Endothelial cell of umbilical vein (primary cell): ENCODE measurements at regions of chr19 and their contacts with region 1.

Region 1: GRCh38 chr19:28330831-28331230 is 882.1 kb downstream of the UQCRFS1 start:
- DNase-seq: peak; percentile 59
- H3K4me3 ChIP-seq: no peak overlapping the region
- H3K27ac ChIP-seq: peak overlapping the region; percentile 73
- H3K4me1 ChIP-seq: peaks cover 13% of the 10 kb centered on the region
- H3K27me3 ChIP-seq: peaks cover 0 to 3% of the 10 kb centered on the region in 2 experiments
- CTCF ChIP-seq: no peak
- POLR2A ChIP-seq: no peak

Region 2: GRCh38 chr19:27793644-27794493 is 537.0 kb before region 1 on chr19:
- CTCF ChIA-PET with region 1: no interaction called
- POLR2A ChIA-PET with region 1: no interaction called
- dilution Hi-C with region 1: no loop called
- intact Hi-C with region 1: loop called (anchors 5 kb)
- DNase-seq: peak; percentile 93
- H3K4me3 ChIP-seq: peak overlapping the region; percentile 61 to 65 (median 61)
- H3K27ac ChIP-seq: peak overlapping the region; percentile 14
- H3K4me1 ChIP-seq: peaks cover 5% of the 10 kb centered on the region
- H3K27me3 ChIP-seq: no peaks in the 10 kb centered on the region
- CTCF ChIP-seq: no peak
- POLR2A ChIP-seq: no peak

Region 3: GRCh38 chr19:28289295-28290063 is 41.4 kb before region 1 on chr19:
- CTCF ChIA-PET with region 1: no interaction called
- POLR2A ChIA-PET with region 1: no interaction called
- dilution Hi-C with region 1: no loop called
- intact Hi-C with region 1: loop called (anchors 5 kb)
- DNase-seq: peak; percentile 37
- H3K4me3 ChIP-seq: no peak overlapping the region
- H3K27ac ChIP-seq: no peak overlapping the region
- H3K4me1 ChIP-seq: peaks cover 22% of the 10 kb centered on the region
- H3K27me3 ChIP-seq: no peaks in the 10 kb centered on the region
- CTCF ChIP-seq: no peak
- POLR2A ChIP-seq: no peak

Region 4: GRCh38 chr19:28313633-28314032 is 17.2 kb before region 1 on chr19:
- CTCF ChIA-PET with region 1: interaction called, 5 read pairs
- POLR2A ChIA-PET with region 1: no interaction called
- dilution Hi-C with region 1: no loop called
- intact Hi-C with region 1: loop called (anchors 1 kb)
- DNase-seq: peak; percentile 77
- H3K4me3 ChIP-seq: no peak overlapping the region
- H3K27ac ChIP-seq: peak overlapping the region; percentile 43
- H3K4me1 ChIP-seq: peaks cover 13% of the 10 kb centered on the region
- H3K27me3 ChIP-seq: no peaks in the 10 kb centered on the region
- CTCF ChIP-seq: no peak
- POLR2A ChIP-seq: no peak

Region 5: DNA sequence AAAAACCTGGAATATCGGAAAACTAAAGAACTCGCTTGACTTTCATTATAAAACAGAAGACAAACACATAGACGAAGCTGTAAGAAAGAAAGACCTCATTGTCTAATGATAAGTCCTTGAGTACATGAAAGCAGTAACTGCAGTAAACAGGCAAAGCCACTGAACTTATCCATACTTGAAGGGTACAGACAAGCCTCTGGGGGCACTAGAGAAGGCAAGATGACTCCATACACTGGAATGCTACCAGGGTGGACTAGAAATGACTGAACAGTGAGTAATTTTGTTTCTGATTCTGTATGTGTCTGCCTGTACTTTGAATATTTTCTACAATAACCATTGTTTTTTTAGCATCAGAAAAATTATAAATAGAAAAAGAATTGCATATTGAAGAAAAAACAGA is 374.2 kb after region 1 on chr19:
- CTCF ChIA-PET with region 1: no interaction called
- POLR2A ChIA-PET with region 1: no interaction called
- dilution Hi-C with region 1: no loop called
- intact Hi-C with region 1: loop called (anchors 5 kb)
- DNase-seq: no peak
- H3K4me3 ChIP-seq: no peak overlapping the region
- H3K27ac ChIP-seq: no peak overlapping the region
- H3K4me1 ChIP-seq: no peaks in the 10 kb centered on the region
- H3K27me3 ChIP-seq: no peaks in the 10 kb centered on the region
- CTCF ChIP-seq: no peak
- POLR2A ChIP-seq: no peak